IMR-90 (cell line): ENCODE measurements at regions of chr2 and their contacts with region 1.

Region 1: DNA sequence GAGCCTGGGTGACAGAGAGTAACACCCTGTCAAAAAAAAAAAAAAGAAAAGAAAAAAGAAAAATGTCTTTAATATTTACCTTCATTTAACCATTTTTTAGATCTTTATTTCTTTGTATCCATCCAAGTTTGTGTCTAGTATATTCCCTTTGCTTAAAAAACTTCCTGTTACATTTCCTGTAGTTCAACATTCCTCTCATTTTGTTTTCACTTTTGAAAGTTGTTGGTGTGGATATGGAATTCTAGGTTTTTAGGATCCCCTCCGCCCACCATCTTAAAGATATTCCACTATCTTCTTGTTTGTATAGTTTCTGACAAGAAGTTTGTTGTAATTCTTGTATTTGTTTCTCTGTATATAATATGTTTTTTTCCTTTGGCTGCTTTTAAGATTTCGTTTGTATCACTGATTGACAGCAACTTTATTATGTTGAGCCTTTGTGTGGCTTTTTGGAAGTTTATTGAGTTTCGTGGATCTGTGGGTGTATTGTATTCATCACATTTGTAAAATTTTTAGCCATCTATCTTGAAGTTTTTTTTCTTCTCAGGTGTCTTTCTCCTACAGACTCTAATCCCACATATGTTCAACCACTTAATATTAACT is 200.2 kb downstream of the MCFD2 start:
- DNase-seq: no peak
- ATAC-seq: no peak
- H3K4me3 ChIP-seq: no peak overlapping the region
- H3K27ac ChIP-seq: no peak overlapping the region
- H3K4me1 ChIP-seq: peaks cover 17% of the 10 kb centered on the region
- H3K27me3 ChIP-seq: no peaks in the 10 kb centered on the region
- CTCF ChIP-seq: no peak
- POLR2A ChIP-seq: no peak
- RAD21 ChIP-seq: no peak

Region 2: GRCh38 chr2:46684661-46685060 is 30.8 kb before region 1 on chr2:
- CTCF ChIA-PET with region 1: no interaction called
- POLR2A ChIA-PET with region 1: no interaction called
- dilution Hi-C with region 1: no loop called
- in situ Hi-C with region 1: no loop called
- intact Hi-C with region 1: loop called (anchors 1 kb)
- DNase-seq: no peak
- ATAC-seq: no peak
- H3K4me3 ChIP-seq: no peak overlapping the region
- H3K27ac ChIP-seq: no peak overlapping the region
- H3K4me1 ChIP-seq: peaks cover 7% of the 10 kb centered on the region
- H3K27me3 ChIP-seq: no peaks in the 10 kb centered on the region
- CTCF ChIP-seq: no peak
- POLR2A ChIP-seq: no peak
- RAD21 ChIP-seq: no peak